ENCODE measurements at regions of chr12 and their contacts with region 1.

Region 1: DNA sequence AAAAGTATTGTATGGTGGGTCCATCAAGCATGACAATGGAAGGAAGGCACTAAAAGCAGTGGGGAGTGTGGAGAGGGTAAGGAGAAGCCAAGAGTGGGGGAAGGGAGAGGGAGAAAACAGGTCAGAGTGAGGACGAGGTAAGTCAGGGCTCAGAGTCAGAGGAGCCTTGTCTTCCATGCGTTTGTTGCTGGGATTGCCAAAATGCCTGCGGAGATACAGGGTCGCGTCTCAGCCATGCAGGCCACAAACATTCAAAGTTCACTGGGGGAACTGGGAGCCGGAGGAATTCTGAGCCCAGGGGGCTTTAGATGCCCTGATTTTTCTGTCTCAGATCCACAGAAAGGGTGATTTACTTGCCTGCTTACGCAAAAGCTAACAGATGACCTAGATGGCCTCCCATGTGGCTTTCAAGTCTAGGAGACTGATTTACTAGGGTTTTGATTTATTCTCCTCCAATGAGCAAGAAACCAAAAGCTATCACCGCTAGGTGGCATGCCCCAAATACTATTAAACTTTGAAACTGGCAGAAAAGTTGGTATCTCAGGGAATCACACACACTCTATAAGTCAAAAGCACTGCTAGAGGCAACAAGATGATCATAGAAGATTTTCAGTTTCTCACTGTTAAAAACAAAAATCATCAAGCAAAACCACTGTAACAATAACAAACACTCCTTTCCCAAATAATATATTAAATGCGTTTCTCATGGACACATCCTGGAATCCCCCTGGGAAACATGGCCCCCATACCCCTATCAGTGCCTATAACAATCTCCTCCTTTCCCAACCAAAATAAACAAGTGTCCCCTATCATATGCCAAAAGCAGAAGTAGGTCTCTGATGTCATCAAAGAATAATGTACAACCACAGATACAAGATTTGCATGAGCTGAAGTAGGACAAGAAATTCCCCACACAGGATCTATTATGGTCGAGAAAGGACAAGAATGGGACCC is 26.6 kb upstream of the MDM1 start:
- DNase-seq: peak; percentile 28 to 49
- ATAC-seq: peak; percentile 96
- H3K4me3 ChIP-seq: no peak overlapping the region
- H3K27ac ChIP-seq: peak overlapping the region in 3 of 4 donors; percentile 1 to 36 (median 25)
- H3K4me1 ChIP-seq: peaks cover 10 to 14% of the 10 kb centered on the region in 2 donors
- H3K27me3 ChIP-seq: no peaks in the 10 kb centered on the region
- CTCF ChIP-seq: peak; percentile 46 to 75 (median 69)
- POLR2A ChIP-seq: no peak

Region 2: GRCh38 chr12:68497702-68498101 is 138.9 kb after region 1 on chr12:
- in situ Hi-C with region 1: no loop called
- intact Hi-C with region 1: loop called (anchors 5 kb)
- DNase-seq: no peak
- ATAC-seq: no peak
- H3K4me3 ChIP-seq: no peak overlapping the region
- H3K27ac ChIP-seq: no peak overlapping the region
- H3K4me1 ChIP-seq: peaks cover 4 to 6% of the 10 kb centered on the region in 2 donors
- H3K27me3 ChIP-seq: no peaks in the 10 kb centered on the region
- CTCF ChIP-seq: no peak
- POLR2A ChIP-seq: no peak

Measured in gastrocnemius medialis (tissue), 4 donors.